ENCODE measurements at regions of chrX and their contacts with region 1.

Region 1: DNA sequence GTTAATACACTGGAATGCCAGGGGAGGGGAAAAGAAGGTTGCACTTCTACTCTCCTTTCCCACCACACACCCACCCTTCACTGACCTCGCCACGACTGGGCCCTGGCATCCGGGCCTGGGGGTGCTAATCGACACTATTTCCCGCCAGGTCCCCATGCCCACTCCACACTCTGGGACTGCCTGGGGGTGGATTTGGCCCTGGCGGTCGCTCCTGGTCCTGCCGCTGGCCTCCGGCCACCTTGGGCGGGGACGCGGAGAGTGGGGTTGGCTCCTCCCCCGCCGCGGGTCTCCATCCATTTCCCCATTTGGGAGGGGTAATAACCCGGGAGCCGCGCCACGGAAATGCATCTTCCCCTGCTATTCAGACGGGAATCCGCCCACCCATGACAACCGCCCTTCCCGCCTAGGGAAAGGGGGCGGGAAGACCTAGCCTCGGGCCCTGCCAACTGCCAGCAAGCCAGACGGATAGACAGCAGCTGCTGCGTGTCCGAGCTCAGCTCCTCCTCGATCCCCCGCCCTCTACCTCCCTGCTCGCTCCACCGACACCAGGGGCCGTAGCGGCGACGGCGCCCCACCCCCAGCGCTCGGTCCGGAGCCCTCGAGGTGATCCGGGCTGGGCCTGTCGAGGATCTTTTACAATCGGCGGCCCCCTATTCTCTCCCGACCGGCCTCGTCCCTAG is 78.1 kb downstream of the RLIM start:
- DNase-seq: peak; percentile 83 to 89
- ATAC-seq: peak; percentile 86 to 95 (median 92)
- H3K4me3 ChIP-seq: peak overlapping the region; percentile 25 to 61 (median 56)
- H3K27ac ChIP-seq: peak overlapping the region; percentile 74 to 94 (median 87)
- H3K4me1 ChIP-seq: peaks cover 0 to 16% (median 6%) of the 10 kb centered on the region in 9 donors
- H3K27me3 ChIP-seq: peaks cover 0 to 34% (median 0%) of the 10 kb centered on the region in 7 donors
- CTCF ChIP-seq: peak in 8 of 9 donors; percentile 20 to 53 (median 38)

Region 2: DNA sequence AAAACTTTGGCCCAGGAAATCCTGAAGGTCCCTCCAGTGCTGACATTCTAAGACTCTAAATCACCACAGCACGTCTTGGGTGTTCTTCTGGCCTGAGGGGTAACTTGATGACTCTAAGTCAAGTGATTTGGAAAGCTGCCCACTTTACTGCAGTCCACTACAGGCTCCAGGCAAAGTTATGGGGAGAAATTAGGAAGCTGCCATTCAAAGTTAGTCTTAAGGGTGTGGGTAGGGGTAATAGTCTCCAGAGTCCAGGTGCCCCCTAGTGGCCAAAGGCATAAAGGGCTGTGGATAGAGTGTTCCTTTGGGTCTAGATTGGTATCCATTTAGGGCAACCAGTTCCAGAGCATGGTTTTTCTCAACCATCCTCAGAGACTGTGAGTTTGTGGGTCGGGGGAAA is 153.7 kb before region 1 on chrX:
- intact Hi-C with region 1: loop called in 5 of 10 experiments (anchors 2 to 5 kb)
- DNase-seq: peak; percentile 13 to 32
- ATAC-seq: peak; percentile 65 to 94 (median 86)
- H3K4me3 ChIP-seq: no peak overlapping the region
- H3K27ac ChIP-seq: no peak overlapping the region
- H3K4me1 ChIP-seq: no peaks in the 10 kb centered on the region
- H3K27me3 ChIP-seq: peaks cover 0 to 40% (median 0%) of the 10 kb centered on the region in 7 donors
- CTCF ChIP-seq: peak; percentile 49 to 80 (median 68)

Region 3: GRCh38 chrX:74421036-74421739 is 115.1 kb before region 1 on chrX and contains the start of gene SLC16A2:
- intact Hi-C with region 1: loop called in 5 of 10 experiments (anchors 2 to 5 kb)
- DNase-seq: peak; percentile 74 to 82
- ATAC-seq: peak; percentile 70 to 87 (median 82)
- H3K4me3 ChIP-seq: peak within 1 kb of the TSS; percentile 41 to 68 (median 59)
- H3K27ac ChIP-seq: peak within 1 kb of the TSS; percentile 84 to 97 (median 91)
- H3K4me1 ChIP-seq: peaks cover 0 to 12% (median 5%) of the 10 kb centered on the region in 9 donors
- H3K27me3 ChIP-seq: peaks cover 0 to 66% (median 0%) of the 10 kb centered on the region in 7 donors
- CTCF ChIP-seq: no peak
- total RNA-seq, gene SLC16A2: 4.9 to 12.6 (median 7.4) TPM

Region 4: GRCh38 chrX:74585766-74586165 is 49.5 kb after region 1 on chrX:
- intact Hi-C with region 1: loop called in 1 of 10 experiments (anchors 1 kb)
- DNase-seq: no peak
- ATAC-seq: no peak
- H3K4me3 ChIP-seq: no peak overlapping the region
- H3K27ac ChIP-seq: no peak overlapping the region
- H3K4me1 ChIP-seq: no peaks in the 10 kb centered on the region
- H3K27me3 ChIP-seq: peaks cover 0 to 21% (median 0%) of the 10 kb centered on the region in 7 donors
- CTCF ChIP-seq: no peak